GM12878 (cell line): ENCODE measurements at regions of chr18 and their contacts with region 1.

Region 1: DNA sequence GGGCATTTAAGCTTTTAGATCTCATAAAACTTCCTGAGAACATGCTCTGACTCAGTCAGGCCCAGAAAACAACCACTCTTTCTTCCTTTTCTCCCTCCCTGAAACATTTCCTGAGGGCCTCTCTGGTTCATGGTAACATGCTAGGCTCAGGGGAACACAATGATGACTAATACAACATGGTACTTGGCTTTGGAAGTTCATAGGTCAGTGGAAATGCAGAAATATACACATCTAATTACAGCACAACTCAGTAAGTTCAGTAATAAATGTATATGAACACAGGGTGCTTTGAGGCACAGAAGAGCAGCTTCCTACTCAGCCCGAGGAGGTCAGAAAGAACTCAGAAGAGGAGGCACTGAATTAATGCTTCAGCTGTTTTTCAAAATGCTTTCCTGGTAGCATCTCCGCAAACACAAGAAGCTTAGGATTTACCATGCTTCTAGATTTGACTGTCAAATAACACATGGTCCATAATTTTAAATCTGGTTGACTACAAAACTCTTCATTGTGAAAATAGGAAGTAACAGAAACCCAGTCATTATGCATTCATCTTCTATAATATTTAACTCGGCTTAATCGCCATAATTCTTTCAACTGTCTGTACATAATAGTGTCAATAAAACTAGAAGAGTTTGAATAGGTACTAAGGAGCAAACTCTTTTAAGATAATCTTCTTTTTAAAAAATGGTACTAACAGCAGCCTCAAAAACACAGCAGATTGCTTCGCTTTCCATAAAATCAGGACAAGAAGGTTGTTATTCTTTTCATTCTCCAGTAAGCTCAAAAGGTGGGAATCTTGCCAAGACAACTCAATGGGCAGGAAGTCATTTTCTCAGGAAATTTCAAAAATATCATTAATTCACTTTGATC is 251.3 kb downstream of the DLGAP1 start:
- DNase-seq: no peak
- ATAC-seq: peak; percentile 70
- H3K4me3 ChIP-seq: no peak overlapping the region
- H3K27ac ChIP-seq: no peak overlapping the region
- H3K4me1 ChIP-seq: no peaks in the 10 kb centered on the region
- H3K27me3 ChIP-seq: no peaks in the 10 kb centered on the region
- CTCF ChIP-seq: no peak
- EP300 ChIP-seq: no peak
- POLR2A ChIP-seq: no peak
- RAD21 ChIP-seq: no peak

Region 2: GRCh38 chr18:4077204-4077603 is 126.6 kb before region 1 on chr18:
- CTCF ChIA-PET with region 1: no interaction called
- POLR2A ChIA-PET with region 1: no interaction called
- RAD21 ChIA-PET with region 1: no interaction called
- SMC1A ChIA-PET with region 1: no interaction called
- in situ Hi-C with region 1: no loop called
- intact Hi-C with region 1: no loop called
- DNase-seq: no peak
- ATAC-seq: peak; percentile 86
- H3K4me3 ChIP-seq: no peak overlapping the region
- H3K27ac ChIP-seq: no peak overlapping the region
- H3K4me1 ChIP-seq: no peaks in the 10 kb centered on the region
- H3K27me3 ChIP-seq: no peaks in the 10 kb centered on the region
- CTCF ChIP-seq: no peak
- EP300 ChIP-seq: 0 out of 4 replicates have a peak, but pooled peaks of 1 of the 2 experiments have one; percentile 21
- POLR2A ChIP-seq: no peak
- RAD21 ChIP-seq: no peak

Region 3: DNA sequence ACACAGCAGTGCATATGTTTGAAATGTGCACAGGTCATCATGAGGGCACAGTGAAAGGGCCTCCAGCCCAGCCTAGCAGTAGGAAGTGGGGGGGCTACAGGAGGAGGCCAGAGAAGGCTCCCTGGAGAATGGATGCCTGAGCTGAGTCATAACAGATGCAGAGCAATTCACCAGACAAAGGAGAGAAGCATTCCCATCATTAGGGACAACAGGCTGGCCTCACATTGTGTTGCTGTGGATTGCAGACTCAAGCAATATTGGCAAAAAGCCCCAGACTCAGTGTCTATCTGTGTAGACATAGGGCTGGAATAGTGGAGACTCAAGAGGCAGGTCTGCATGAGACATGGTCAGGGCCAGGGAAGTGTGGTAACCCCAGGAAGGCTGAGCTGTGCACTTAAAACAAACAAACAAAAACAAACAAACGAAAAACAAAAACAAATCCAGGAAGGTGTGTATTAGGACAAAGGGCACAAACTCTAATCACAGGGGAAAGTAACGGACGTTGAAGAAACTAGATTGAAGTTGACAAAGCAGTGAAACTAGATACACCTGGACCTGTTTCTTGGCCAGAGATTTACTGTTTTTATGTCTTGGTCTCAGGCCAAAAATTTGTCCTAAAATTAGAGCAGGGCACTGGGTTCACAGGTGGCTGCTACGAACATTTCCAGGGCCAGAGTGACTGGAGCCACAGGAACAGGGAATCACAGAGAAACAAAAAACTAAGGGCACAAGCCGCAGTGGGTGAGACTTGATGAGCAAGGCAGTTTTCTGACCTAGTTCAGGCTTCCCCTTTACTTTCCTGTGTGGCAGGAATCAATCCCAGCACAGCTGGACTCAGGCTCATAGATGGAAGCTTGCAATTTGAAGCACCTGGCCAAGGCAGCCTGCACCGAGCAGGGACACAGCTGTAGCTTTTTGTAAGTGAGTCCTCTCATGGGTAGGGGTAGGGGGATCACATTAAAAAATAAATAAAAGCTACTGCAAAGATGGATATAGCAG is 78.3 kb before region 1 on chr18:
- CTCF ChIA-PET with region 1: no interaction called
- POLR2A ChIA-PET with region 1: no interaction called
- RAD21 ChIA-PET with region 1: no interaction called
- SMC1A ChIA-PET with region 1: no interaction called
- in situ Hi-C with region 1: no loop called
- intact Hi-C with region 1: no loop called
- DNase-seq: no peak
- ATAC-seq: peak; percentile 27
- H3K4me3 ChIP-seq: no peak overlapping the region
- H3K27ac ChIP-seq: no peak overlapping the region
- H3K4me1 ChIP-seq: no peaks in the 10 kb centered on the region
- H3K27me3 ChIP-seq: no peaks in the 10 kb centered on the region
- CTCF ChIP-seq: no peak
- EP300 ChIP-seq: no peak
- POLR2A ChIP-seq: no peak
- RAD21 ChIP-seq: no peak

Region 4: GRCh38 chr18:4230450-4231168 is 26.8 kb after region 1 on chr18:
- CTCF ChIA-PET with region 1: interaction called, 5 read pairs
- POLR2A ChIA-PET with region 1: interaction called, 4 read pairs
- RAD21 ChIA-PET with region 1: interaction called, 5 read pairs
- SMC1A ChIA-PET with region 1: interaction called, 28 read pairs
- in situ Hi-C with region 1: no loop called
- intact Hi-C with region 1: no loop called
- DNase-seq: no peak
- ATAC-seq: peak; percentile 60
- H3K4me3 ChIP-seq: no peak overlapping the region
- H3K27ac ChIP-seq: no peak overlapping the region
- H3K4me1 ChIP-seq: no peaks in the 10 kb centered on the region
- H3K27me3 ChIP-seq: no peaks in the 10 kb centered on the region
- CTCF ChIP-seq: no peak
- EP300 ChIP-seq: 0 out of 4 replicates have a peak, but pooled peaks of 1 of the 2 experiments have one; percentile 49
- POLR2A ChIP-seq: no peak
- RAD21 ChIP-seq: no peak